A673 (cell line): ENCODE measurements at regions of chr16 and their contacts with region 1.

Region 1: GRCh38 chr16:77236063-77236511 is 36.9 kb downstream of the SYCE1L start:
- DNase-seq: peak; percentile 88
- H3K4me3 ChIP-seq: no peak overlapping the region
- H3K27ac ChIP-seq: no peak overlapping the region
- H3K4me1 ChIP-seq: no peaks in the 10 kb centered on the region
- H3K27me3 ChIP-seq: no peaks in the 10 kb centered on the region
- CTCF ChIP-seq: peak; percentile 99

Region 2: DNA sequence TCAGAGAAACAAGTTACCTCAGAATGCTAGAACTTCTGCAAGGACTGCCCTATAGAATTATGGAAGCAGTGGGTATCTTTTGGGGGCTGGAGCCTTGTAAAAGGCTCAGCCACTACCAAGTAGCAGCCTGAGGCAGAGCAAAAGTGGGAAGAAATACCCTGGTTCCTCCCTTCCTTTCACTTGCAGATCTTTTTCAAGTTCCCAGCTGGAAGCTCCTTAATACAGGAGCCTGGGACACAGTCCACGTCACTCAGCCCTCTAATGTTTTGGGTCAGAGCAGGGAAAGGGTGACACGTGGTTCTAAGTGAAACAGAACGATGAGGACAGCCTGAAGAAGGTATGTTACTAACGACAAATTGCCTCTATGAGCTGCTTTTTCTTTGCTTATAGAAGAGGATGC is 865.7 kb before region 1 on chr16:
- CTCF ChIA-PET with region 1: no interaction called
- POLR2A ChIA-PET with region 1: no interaction called
- intact Hi-C with region 1: no loop called
- DNase-seq: no peak
- H3K4me3 ChIP-seq: no peak overlapping the region
- H3K27ac ChIP-seq: no peak overlapping the region
- H3K4me1 ChIP-seq: no peaks in the 10 kb centered on the region
- H3K27me3 ChIP-seq: no peaks in the 10 kb centered on the region
- CTCF ChIP-seq: no peak

Region 3: GRCh38 chr16:77584205-77584859 is 348.2 kb after region 1 on chr16:
- CTCF ChIA-PET with region 1: interaction called, 16 read pairs
- POLR2A ChIA-PET with region 1: no interaction called
- intact Hi-C with region 1: loop called (anchors 1 kb)
- DNase-seq: peak; percentile 77
- H3K4me3 ChIP-seq: no peak overlapping the region
- H3K27ac ChIP-seq: no peak overlapping the region
- H3K4me1 ChIP-seq: no peaks in the 10 kb centered on the region
- H3K27me3 ChIP-seq: no peaks in the 10 kb centered on the region
- CTCF ChIP-seq: peak; percentile 87

Region 4: GRCh38 chr16:77971306-77972271 is 735.5 kb after region 1 on chr16:
- CTCF ChIA-PET with region 1: no interaction called
- POLR2A ChIA-PET with region 1: no interaction called
- intact Hi-C with region 1: loop called (anchors 10 kb)
- DNase-seq: peak; percentile 72
- H3K4me3 ChIP-seq: no peak overlapping the region
- H3K27ac ChIP-seq: no peak overlapping the region
- H3K4me1 ChIP-seq: no peaks in the 10 kb centered on the region
- H3K27me3 ChIP-seq: no peaks in the 10 kb centered on the region
- CTCF ChIP-seq: peak; percentile 86